A549 (cell line): ENCODE measurements at regions of chr17 and their contacts with region 1.

Region 1: DNA sequence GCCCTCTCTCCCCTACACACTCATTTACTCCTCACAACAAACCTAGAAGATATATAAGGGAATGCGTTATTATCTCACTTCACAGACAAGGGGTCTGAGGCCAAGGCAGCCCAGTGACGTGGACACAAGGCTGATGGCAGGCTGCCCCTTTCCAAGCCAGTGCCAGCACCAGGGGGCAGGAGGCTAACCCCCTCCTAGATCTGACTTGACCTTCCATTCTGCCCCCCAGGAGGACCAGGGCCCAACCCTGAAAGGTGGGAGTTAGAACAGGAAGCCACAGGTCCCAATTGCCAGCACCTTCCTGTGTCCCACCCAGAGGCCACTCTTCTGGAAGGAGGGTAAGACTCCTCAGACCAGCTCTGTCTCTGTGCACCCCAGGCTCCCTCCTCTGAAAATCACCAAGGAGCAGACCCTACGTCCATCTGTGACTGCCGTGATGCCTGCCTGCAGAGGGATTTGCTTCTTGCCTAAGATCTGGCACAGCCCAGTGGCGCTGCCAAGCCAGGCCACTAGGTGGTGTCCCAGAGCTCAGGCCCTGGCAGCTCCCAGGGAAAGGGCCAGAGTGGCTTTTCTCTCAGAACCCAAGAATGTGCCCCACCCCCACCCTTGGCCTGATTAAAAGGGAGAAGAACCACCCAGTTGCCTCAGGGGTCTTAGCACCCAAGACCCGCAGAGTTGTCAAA is 42.4 kb upstream of the MRPS23 start:
- DNase-seq: peak; percentile 92
- ATAC-seq: peak; percentile 66 to 84
- H3K4me3 ChIP-seq: no peak overlapping the region
- H3K27ac ChIP-seq: peak overlapping the region; percentile 92 to 96
- H3K4me1 ChIP-seq: peaks cover 81% of the 10 kb centered on the region
- CTCF ChIP-seq: peak; percentile 97
- EP300 ChIP-seq: no peak
- POLR2A ChIP-seq: no peak
- RAD21 ChIP-seq: peak; percentile 95 to 96

Region 2: GRCh38 chr17:57838857-57839570 is 53.3 kb before region 1 on chr17:
- CTCF ChIA-PET with region 1: no interaction called
- POLR2A ChIA-PET with region 1: no interaction called
- DNase-seq: no peak
- ATAC-seq: no peak
- H3K4me3 ChIP-seq: no peak overlapping the region
- H3K27ac ChIP-seq: no peak overlapping the region
- H3K4me1 ChIP-seq: peaks cover 10% of the 10 kb centered on the region; the same call in 1 of the 3 replicates
- CTCF ChIP-seq: no peak
- EP300 ChIP-seq: no peak
- POLR2A ChIP-seq: no peak
- RAD21 ChIP-seq: no peak

Region 3: DNA sequence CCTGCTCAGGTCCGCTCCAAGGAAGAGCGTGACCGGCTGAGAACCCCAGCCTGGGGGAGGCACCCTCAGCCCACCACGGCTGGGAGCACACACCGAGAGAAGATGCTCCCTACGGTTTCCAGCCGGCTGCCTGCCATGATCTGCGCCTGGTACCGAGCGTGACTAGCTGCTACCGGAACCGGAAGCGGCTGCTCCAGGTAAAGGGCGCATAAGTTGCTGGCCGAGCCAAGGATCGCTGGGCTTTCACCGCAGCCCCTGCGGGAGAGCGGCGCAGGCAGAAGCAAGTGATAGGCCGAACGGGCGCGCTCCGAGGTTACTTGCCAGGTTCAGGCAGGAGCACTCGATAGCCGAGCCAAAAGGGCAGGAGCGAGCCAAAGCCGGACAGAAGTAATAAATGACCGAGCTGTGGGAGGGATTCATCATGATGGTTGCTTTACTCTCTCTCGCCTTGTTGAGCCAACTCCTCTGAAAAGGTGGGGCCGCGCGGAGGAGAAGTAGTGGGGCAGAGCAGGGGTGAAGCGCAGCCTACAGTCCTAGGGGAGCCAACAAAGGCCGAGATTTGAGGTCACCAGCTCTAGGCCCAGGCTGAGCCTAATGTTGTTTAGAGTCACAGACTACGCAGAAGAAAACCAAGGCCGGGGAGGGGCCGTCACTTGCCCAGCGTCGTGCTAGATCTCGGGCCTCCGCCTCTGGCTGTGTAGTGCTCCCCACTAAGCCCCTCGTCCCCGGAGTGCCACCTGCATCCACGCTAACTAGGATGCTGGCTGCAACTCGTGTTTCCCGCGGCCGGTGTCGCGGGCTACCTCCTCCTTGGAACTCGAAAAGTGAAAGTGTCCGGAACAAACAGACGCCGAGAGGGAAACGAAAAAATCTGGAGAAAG is 42.2 kb before region 1 on chr17 and contains the start of gene MRPS23:
- CTCF ChIA-PET with region 1: interaction called, 859 read pairs
- POLR2A ChIA-PET with region 1: no interaction called
- DNase-seq: peak; percentile 91 to 99
- ATAC-seq: peak; percentile 93 to 95
- H3K4me3 ChIP-seq: peak within 1 kb of the TSS; percentile 95
- H3K27ac ChIP-seq: peak within 1 kb of the TSS; percentile 93
- H3K4me1 ChIP-seq: peaks cover 54% of the 10 kb centered on the region
- CTCF ChIP-seq: no peak
- EP300 ChIP-seq: no peak
- POLR2A ChIP-seq: peak; percentile 84
- RAD21 ChIP-seq: peak; percentile 28 to 34; a peak in 4 of 5 replicates
- polyA plus RNA-seq, gene MRPS23: 73.2 and 110 TPM in 2 replicates

Region 4: DNA sequence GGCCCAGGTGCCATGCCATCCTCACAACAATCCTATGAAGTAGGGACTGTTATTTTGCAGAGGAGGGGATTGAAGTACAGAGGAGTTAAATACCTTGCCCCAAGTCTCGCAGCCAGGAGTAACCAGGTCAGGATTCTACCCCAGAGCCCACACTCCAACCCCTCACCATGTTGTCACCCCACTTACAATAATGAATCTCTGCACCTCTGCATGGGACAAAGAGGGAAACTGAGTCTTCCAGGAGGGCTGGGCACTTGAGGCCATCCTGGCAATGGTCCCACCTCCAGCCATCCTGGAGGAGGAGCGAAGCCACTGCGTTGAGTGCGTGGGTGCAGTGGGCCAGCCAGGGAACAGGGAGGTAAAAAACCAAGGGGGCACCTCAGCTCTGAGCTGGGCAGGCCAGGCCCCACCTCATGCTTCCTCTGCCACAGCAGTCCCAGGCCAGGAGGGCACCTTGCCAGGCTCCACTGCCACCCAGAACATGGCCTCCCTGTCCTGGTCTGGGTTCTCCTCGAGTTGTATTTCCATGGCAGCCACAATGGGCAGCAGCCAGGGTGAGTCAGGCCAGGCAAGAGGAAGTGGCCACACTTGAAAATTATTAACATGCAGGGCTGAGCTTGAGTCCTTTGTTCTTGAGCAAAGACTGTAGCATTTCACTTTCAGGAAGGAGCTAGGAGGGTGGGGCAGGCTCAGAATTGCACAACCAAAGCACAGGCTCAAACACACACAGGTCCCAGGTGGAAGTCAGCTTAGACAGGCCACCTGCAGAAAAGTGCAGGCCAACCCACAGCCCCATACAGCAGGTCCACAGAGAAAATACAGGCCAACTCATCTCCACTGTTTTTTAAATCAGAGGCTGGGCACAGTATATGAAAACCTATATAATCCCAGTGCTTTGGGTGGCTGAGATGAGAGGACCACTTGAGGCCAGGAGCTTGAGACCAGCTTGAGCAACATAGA is 10.8 kb after region 1 on chr17:
- CTCF ChIA-PET with region 1: interaction called, 859 read pairs
- POLR2A ChIA-PET with region 1: interaction called, 11 read pairs
- DNase-seq: peak; percentile 95 to 99
- ATAC-seq: peak; percentile 85 to 87
- H3K4me3 ChIP-seq: no peak overlapping the region
- H3K27ac ChIP-seq: peak overlapping the region; percentile 94 to 97
- H3K4me1 ChIP-seq: peaks cover 82% of the 10 kb centered on the region
- CTCF ChIP-seq: no peak
- EP300 ChIP-seq: peak; percentile 36 to 72; a peak in 2 of 5 replicates
- POLR2A ChIP-seq: no peak
- RAD21 ChIP-seq: peak; percentile 41 to 53

Region 5: GRCh38 chr17:57916925-57917858 is 24.9 kb after region 1 on chr17:
- CTCF ChIA-PET with region 1: interaction called, 18 read pairs
- POLR2A ChIA-PET with region 1: interaction called, 3 read pairs
- DNase-seq: peak in 1 of 2 experiments; percentile 63
- ATAC-seq: peak; percentile 25 to 53; a peak in 4 of 6 replicates
- H3K4me3 ChIP-seq: no peak overlapping the region
- H3K27ac ChIP-seq: peak overlapping the region; percentile 56 to 74
- H3K4me1 ChIP-seq: peaks cover 76% of the 10 kb centered on the region
- CTCF ChIP-seq: peak; percentile 28
- EP300 ChIP-seq: no peak
- POLR2A ChIP-seq: no peak
- RAD21 ChIP-seq: peak; percentile 35 to 55; a peak in 3 of 5 replicates

Region 6: DNA sequence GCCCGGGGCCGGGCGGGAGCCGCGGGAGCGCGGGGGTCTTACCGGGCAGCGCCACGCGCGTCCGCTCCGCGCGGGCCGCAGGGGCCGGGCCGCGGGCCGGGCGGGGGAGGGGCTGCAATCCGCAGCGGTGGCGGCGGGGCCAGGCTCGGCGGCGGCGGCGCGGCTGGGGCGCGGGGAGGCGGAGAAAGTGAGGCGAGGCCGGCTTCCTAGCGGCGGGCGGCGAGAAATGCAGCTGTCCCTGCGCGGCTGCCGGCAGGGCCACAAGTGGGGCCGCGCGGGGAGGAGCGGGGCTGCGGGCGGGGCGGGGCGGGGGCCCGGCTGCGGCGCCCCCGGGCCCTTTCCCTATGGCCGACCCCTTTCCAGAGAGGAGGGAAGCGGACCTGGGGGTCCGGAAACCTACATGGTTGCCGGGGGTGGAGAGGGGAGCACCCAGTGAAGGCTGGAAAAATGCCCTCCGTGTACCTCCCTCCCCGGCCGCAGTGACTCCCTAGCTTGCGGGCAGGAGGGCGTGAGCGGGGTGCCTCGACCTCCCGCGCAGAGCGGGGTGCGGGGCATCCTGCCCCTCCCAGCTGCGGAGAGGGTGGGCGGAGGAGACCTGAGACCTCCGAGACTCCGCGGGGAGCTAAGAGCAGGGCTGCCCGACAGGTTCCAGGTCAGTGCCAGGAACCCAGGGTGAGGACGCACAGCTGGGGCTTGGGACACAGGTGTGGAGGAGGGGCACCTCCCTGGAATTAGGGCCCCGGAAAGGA is 63.1 kb after region 1 on chr17 and contains the start of gene CUEDC1:
- CTCF ChIA-PET with region 1: interaction called, 143 read pairs
- POLR2A ChIA-PET with region 1: interaction called, 7 read pairs
- DNase-seq: peak; percentile 69 to 76
- ATAC-seq: peak; percentile 69 to 79
- H3K4me3 ChIP-seq: peak within 1 kb of the TSS; percentile 92
- H3K27ac ChIP-seq: peak within 1 kb of the TSS; percentile 93 to 100
- H3K4me1 ChIP-seq: peaks cover 67% of the 10 kb centered on the region
- CTCF ChIP-seq: peak; percentile 33; the same call in 2 of the 3 replicates
- EP300 ChIP-seq: no peak
- POLR2A ChIP-seq: peak; percentile 70
- RAD21 ChIP-seq: peak; percentile 9 to 40; a peak in 2 of 5 replicates
- polyA plus RNA-seq, gene CUEDC1: 44.3 and 54.8 TPM in 2 replicates

Region 7: GRCh38 chr17:57982452-57983170 is 90.3 kb after region 1 on chr17:
- CTCF ChIA-PET with region 1: interaction called, 43 read pairs
- POLR2A ChIA-PET with region 1: interaction called, 5 read pairs
- DNase-seq: no peak
- ATAC-seq: no peak
- H3K4me3 ChIP-seq: no peak overlapping the region
- H3K27ac ChIP-seq: 0 out of 6 replicates have a peak overlapping the region, but pooled peaks of 1 of the 2 experiments have one; percentile 13
- H3K4me1 ChIP-seq: peaks cover 62% of the 10 kb centered on the region
- CTCF ChIP-seq: no peak
- EP300 ChIP-seq: no peak
- POLR2A ChIP-seq: no peak
- RAD21 ChIP-seq: no peak

Region 8: GRCh38 chr17:58112970-58113631 is 220.8 kb after region 1 on chr17:
- CTCF ChIA-PET with region 1: interaction called, 10 read pairs
- POLR2A ChIA-PET with region 1: no interaction called
- DNase-seq: peak; percentile 78 to 79
- ATAC-seq: peak; percentile 80 to 87
- H3K4me3 ChIP-seq: no peak overlapping the region
- H3K27ac ChIP-seq: no peak overlapping the region
- H3K4me1 ChIP-seq: no peaks in the 10 kb centered on the region
- CTCF ChIP-seq: peak; percentile 96
- EP300 ChIP-seq: no peak
- POLR2A ChIP-seq: no peak
- RAD21 ChIP-seq: peak; percentile 98 to 99